ENCODE measurements at regions of chr17 and their contacts with region 1.

Region 1: GRCh38 chr17:78873519-78874340 is 29.3 kb downstream of the CEP295NL start:
- DNase-seq: peak; percentile 94
- H3K4me3 ChIP-seq: no peak overlapping the region
- H3K27ac ChIP-seq: peak overlapping the region; percentile 27
- H3K4me1 ChIP-seq: peaks cover 30% of the 10 kb centered on the region
- H3K27me3 ChIP-seq: no peaks in the 10 kb centered on the region
- CTCF ChIP-seq: no peak
- POLR2A ChIP-seq: peak; percentile 29

Region 2: DNA sequence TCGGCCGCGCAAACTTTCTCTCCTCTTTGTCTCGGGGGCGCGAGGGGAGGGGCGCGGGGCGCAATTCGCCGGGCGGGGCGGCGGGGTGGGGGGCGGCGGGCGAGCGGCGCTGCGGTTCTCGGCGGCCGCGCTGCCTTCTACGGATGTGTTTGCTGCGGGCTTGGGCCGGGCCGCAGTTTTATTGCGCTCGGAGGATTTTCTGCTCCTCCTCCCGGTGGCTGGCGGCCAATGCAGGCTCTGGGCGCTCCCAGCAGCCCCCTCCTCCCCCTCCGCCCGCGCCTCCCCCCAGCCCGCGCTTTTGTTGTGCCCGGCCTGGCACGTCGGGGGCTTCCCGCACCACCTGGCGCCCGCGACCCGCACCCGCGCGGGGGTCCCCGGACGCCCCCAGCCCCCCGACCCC is 51.5 kb after region 1 on chr17 and contains the start of gene TIMP2:
- CTCF ChIA-PET with region 1: no interaction called
- POLR2A ChIA-PET with region 1: no interaction called
- dilution Hi-C with region 1: no loop called
- intact Hi-C with region 1: loop called (anchors 2 kb)
- DNase-seq: peak; percentile 86
- H3K4me3 ChIP-seq: peak within 1 kb of the TSS; percentile 54 to 78 (median 59)
- H3K27ac ChIP-seq: peak within 1 kb of the TSS; percentile 64
- H3K4me1 ChIP-seq: peaks cover 13% of the 10 kb centered on the region
- H3K27me3 ChIP-seq: no peaks in the 10 kb centered on the region
- CTCF ChIP-seq: peak in 1 of 2 donors; percentile 20
- POLR2A ChIP-seq: peak; percentile 83
- total RNA-seq, gene TIMP2: 280 and 318 TPM in 2 replicates

Region 3: GRCh38 chr17:78933959-78934568 is 60.3 kb after region 1 on chr17:
- CTCF ChIA-PET with region 1: interaction called, 3 read pairs
- POLR2A ChIA-PET with region 1: no interaction called
- dilution Hi-C with region 1: no loop called
- intact Hi-C with region 1: loop called (anchors 2 kb)
- DNase-seq: peak; percentile 96
- H3K4me3 ChIP-seq: peak overlapping the region in 2 of 3 experiments; percentile 16 to 25
- H3K27ac ChIP-seq: peak overlapping the region; percentile 93
- H3K4me1 ChIP-seq: peaks cover 30% of the 10 kb centered on the region
- H3K27me3 ChIP-seq: no peaks in the 10 kb centered on the region
- CTCF ChIP-seq: no peak
- POLR2A ChIP-seq: peak; percentile 55

Region 4: DNA sequence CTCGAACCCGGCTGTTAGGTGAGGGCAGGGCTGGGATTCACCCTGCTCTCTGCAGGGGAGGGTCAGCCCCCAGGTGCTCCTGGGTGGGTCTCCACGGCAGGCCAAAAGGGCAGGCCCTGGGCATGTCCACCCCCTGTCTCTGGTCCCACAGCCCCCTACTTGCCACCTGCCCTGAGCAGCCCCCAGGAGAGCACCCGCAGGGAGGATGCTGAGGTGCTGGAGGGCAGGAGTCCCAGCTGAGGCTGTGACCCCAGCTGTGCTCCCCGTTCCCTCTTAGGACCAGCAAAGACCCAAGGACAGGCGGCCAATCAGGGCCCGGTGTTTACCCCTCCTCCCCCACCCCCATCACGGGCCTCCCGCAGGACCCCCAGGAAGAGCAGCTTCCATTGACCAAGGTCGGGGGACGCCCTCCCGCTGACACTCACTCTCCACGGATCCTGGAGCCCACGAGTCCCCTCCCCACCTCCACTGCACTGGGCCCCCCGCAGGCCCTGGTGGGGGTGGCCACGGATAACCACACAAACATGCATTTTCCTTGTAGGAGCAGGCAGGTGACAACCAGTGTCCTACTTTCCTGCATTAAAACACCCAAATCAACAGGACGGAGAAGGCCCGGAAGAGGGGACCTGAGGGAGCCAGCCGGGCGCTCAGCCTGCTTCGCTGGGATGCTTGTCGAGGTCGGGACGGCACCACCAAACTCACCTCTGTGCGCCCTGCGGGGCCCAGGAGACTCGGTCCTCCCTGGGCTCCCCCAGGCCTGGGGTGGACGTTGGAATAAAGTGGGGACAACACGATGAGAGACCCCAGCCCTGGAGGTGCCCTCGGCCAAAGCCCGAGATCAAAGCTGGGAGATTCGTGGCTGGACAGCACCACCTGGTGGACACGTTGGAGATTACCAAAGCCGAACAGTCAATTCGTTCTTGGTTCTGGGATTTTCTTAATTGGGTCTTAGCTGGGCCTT is 834.5 kb after region 1 on chr17:
- CTCF ChIA-PET with region 1: no interaction called
- POLR2A ChIA-PET with region 1: no interaction called
- dilution Hi-C with region 1: no loop called
- intact Hi-C with region 1: no loop called
- DNase-seq: peak; percentile 35
- H3K4me3 ChIP-seq: no peak overlapping the region
- H3K27ac ChIP-seq: no peak overlapping the region
- H3K4me1 ChIP-seq: no peaks in the 10 kb centered on the region
- H3K27me3 ChIP-seq: no peaks in the 10 kb centered on the region
- CTCF ChIP-seq: peak; percentile 57 to 75
- POLR2A ChIP-seq: no peak

Measured in endothelial cell of umbilical vein (primary cell).